HAP-1 (cell line): ENCODE measurements at regions of chr6 and their contacts with region 1.

Region 1: DNA sequence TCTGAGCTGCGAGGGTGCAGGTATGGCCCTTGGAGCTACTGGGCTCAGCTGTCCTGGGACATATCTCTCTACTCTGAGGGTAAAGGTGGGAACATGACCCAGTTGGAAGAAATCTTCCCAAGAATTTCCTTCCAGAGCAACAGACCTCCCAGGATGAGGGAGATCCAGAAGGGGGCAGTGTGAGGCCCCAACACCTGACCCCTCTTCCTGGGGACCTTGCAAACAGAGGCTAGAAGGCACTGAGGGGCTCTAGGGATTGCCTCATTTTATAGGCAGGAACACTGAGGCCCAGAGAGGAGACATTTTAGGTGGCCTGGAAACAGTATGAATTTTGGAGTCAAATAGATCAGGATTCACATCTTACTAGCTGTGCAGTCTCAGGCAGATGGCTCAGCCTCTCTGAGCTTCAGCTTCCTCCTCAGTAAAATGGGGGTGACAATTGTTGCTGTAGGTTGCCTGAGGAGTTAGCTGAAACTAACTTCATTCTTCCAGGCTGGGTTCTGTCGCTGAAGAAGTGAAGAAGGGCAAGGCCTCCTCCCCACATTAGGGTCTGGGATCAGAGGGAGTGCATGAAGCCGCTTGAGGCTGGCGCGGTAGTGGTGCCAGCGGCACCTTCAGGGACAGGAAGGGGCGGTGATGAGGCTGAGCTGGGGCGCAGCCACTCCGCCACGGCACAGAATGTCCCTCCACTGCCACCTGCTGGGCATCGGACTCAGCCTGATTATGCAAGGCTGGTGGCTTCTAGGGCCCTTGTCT is 11.4 kb downstream of the KCNK17 start:
- DNase-seq: peak; percentile 71 to 91
- H3K4me3 ChIP-seq: no peak overlapping the region
- H3K4me1 ChIP-seq: no peaks in the 10 kb centered on the region
- H3K27me3 ChIP-seq: peaks cover 13% of the 10 kb centered on the region

Region 2: DNA sequence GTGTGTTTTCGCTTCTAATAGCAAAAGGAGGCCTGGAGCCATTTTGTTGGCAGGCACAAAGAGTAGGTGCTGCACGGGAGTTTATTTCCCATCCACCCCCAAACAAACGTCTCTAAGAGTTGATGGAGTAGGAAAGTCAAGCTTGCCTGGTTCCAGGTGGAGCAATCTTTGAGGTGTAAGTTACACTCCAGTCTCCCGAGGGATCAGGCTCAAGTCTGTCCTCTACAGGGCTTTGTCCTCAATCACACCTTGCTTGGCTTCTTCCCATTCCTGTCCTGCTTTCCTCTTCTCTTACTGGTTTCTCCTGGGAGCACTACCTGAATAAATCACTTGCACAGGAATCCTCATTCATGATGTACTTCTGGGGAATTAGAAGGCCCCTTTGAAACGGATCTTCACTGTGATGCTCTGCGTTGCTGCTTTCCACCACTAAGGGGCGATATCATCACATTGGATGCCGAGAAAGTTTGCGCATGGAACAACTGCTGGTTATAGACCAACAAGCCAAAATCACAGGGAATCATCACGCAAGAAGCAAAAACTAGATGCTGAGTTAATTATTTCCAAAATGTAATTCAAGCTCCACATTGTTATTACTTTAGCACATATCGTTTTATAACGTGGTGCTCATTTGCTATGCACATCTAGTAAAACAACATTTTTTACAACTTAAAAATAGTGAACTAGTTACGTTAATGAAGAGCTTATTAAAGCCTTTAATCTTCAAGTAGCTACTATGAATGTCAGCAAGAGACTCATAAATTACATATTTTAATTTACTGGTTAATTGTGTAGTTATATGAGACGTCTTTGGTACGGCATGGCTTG is 430.9 kb before region 1 on chr6:
- in situ Hi-C with region 1: loop called (anchors 10 kb)
- DNase-seq: peak; percentile 41 to 72
- H3K4me3 ChIP-seq: no peak overlapping the region
- H3K4me1 ChIP-seq: no peaks in the 10 kb centered on the region
- H3K27me3 ChIP-seq: 0 out of 2 replicates have a peak, but pooled peaks cover 6% of the 10 kb centered on the region

Region 3: DNA sequence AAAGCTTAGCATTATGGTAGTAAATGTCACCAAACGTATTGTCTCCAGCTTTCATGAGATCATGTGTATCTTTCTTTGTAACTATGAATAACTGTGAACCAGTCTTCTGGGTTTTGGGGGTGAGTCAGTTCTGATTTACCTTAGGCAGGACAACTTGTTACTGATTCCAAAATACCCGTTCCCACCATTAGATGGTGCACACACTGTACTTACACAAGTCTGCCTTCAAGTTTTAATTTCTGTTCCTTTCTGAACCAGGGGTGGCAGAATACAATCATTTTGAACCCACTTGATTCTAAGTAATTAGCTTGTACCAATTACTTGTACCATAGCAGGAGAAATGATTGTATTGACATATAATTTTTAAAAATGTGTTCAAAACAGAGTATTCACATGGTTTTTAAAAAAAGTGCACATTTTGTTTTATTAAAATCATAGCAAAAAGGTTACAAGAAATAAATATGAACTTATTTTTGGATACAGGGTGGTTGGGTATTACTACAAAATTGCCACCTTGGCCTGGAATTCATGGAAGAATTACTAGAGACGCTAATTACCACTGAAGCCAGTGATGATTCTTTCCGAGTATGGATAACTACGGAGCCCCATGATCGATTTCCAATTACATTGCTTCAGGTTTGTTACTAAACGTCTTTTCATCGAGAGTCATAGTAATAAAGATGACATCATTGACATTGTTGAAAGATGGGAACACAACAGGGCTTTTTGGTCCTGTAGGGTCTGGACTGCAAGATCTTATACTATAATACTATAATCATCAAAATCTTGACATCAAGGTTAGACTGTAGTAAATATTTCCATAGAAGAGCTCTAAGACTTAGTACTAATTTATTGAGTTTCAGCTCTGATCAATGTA is 329.4 kb before region 1 on chr6:
- in situ Hi-C with region 1: loop called (anchors 10 kb)
- DNase-seq: peak; percentile 35 to 63
- H3K4me3 ChIP-seq: no peak overlapping the region
- H3K4me1 ChIP-seq: no peaks in the 10 kb centered on the region
- H3K27me3 ChIP-seq: peaks cover 6% of the 10 kb centered on the region; the same call in 1 of the 2 replicates

Region 4: DNA sequence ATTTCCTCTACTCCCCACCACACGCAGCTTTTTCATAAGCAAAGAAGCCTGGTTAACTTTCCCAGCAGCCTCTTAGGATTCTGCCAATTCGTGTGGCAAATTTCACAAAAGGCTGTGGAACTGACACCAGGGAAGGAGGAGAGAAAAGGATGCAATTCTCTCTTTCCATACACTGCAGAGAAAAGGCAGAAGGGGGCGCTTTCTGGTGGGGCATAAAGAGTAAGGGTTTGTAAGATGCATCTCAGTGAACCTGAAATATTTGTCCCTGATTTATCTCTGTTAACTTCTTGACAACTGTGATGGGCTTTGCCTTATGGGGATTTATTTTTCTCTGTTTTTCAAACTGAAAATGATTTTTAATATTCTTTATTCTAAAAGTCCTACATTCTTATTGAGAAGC is 299.8 kb before region 1 on chr6:
- in situ Hi-C with region 1: loop called (anchors 10 kb)
- DNase-seq: peak in 1 of 2 experiments; percentile 17
- H3K4me3 ChIP-seq: no peak overlapping the region
- H3K4me1 ChIP-seq: no peaks in the 10 kb centered on the region
- H3K27me3 ChIP-seq: peaks cover 22% of the 10 kb centered on the region

Region 5: GRCh38 chr6:39166189-39166911 is 136.5 kb before region 1 on chr6:
- in situ Hi-C with region 1: loop called (anchors 5 kb)
- DNase-seq: peak; percentile 59 to 90
- H3K4me3 ChIP-seq: no peak overlapping the region
- H3K4me1 ChIP-seq: no peaks in the 10 kb centered on the region
- H3K27me3 ChIP-seq: no peaks in the 10 kb centered on the region

Region 6: DNA sequence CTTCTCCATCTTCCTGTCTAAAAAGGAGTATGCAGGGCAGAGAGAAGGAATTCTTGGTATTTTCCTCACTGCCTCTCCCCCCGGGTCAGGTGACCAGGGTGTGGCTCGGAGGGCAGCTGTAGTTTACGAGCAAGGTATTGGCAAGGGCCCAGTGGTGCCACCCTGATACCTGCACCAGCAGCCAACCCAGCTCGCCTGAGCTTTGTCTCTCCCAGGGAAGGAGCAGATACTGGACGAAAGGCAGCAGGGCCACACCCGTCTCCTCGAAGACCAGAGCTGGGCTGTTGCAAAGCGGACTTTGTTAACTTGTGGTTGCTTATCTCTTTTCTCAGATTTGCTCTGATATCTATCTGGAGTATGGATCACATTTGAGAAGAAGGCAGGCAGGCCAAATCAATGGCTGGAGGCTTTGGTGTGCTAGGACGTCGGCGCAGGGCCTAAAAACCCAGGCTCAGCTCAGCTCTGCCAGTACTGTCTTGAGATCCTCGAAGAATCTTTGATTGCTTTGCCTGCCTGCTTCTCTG is 98.9 kb before region 1 on chr6:
- in situ Hi-C with region 1: no loop called
- DNase-seq: peak in 1 of 2 experiments; percentile 18
- H3K4me3 ChIP-seq: no peak overlapping the region
- H3K4me1 ChIP-seq: no peaks in the 10 kb centered on the region
- H3K27me3 ChIP-seq: no peaks in the 10 kb centered on the region

Region 7: GRCh38 chr6:39231456-39232243 is 71.2 kb before region 1 on chr6:
- in situ Hi-C with region 1: loop called (anchors 5 kb)
- DNase-seq: no peak
- H3K4me3 ChIP-seq: no peak overlapping the region
- H3K4me1 ChIP-seq: peaks cover 7% of the 10 kb centered on the region; the same call in 1 of the 2 replicates
- H3K27me3 ChIP-seq: no peaks in the 10 kb centered on the region